Caki2 (cell line): ENCODE measurements at regions of chr12 and their contacts with region 1.

Region 1: DNA sequence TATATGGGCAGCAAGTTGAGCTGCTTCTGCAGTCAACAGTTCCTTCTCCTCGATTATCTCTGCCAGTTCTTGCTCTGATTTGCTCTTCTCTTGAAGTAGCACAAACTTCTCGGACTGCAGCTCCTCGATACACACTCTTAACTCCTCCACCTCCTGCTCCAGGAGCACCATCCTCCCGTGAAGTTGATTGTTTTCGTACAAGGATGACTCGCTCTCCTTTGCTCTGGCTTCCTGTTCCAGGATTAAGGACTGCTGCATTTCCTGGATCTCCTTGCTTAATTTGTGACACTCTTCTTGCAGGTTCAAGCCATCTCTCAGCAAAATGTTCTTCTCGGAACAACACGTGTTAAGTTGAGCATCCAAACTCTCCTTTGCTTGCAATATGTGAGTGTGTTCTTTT is 56.2 kb upstream of the VPS33A start:
- DNase-seq: peak; percentile 59

Region 2: DNA sequence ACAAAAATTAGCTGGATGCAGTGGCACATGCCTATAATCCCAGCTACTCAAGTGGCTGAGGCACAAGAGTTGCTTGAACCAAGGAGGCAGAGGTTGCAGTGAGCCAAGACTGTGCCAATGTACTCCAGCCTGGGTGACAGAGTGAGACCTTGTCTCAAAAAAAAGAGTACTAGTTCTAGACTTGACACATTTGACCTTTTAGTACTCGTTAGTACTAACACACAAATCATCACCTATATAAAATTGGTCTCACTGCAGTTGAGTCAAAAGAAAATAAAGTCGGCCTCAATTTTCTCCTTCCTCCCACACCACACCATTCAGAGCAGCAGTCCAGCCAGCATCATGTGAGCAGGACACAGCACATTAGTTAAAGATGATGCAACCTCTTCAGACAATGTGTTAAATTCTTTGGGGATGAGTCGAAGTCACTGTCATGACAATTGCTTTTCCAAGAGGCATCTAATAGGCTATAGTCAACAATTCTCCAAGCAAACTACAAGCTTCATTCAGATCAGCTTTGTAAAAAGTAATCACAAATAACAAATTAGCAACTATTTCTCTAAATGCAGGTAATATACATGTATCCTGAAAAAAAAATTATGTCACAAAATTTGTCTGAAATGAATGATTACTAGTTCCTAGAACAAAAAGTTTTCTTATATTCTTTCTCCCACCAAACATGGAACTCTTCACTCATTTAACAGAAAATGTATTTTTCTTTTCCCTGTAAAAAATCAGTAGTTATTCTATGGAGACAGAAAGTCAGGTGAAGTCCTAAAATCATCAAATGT is 44.4 kb after region 1 on chr12:
- in situ Hi-C with region 1: loop called (anchors 5 kb)
- DNase-seq: peak; percentile 91